ENCODE measurements at regions of chr17 and their contacts with region 1.

Region 1: GRCh38 chr17:27332485-27333409 is 38.8 kb downstream of the WSB1 start:
- DNase-seq: peak; percentile 98
- H3K4me3 ChIP-seq: peak overlapping the region; percentile 68
- H3K27ac ChIP-seq: peak overlapping the region; percentile 97
- H3K4me1 ChIP-seq: peaks cover 24% of the 10 kb centered on the region
- H3K27me3 ChIP-seq: no peaks in the 10 kb centered on the region
- CTCF ChIP-seq: peak; percentile 96

Region 2: DNA sequence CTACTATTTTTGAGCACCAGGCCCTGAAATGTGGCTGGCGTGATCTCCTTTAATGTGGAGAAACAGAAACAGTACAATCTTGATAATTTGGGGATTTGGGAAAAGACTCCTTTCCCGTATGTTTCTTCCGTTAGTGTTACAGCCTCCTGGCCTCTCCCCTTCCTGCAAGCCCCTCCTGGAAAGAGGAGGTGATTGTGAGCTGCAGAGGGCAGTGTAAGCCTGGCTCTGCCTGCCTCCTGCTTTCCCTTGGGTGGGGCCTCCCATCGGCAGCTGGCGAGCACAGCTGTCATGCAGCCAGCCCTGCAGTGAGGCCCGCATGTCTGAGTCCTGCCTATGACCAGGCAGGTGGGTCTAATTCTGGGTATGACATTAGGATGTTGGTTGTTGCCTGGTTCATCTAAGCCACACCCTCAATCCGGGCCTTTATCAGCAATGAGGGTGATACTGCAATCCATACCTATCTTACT is 87.5 kb before region 1 on chr17:
- intact Hi-C with region 1: loop called (anchors 5 kb)
- DNase-seq: peak; percentile 86
- H3K4me3 ChIP-seq: peak overlapping the region; percentile 41
- H3K27ac ChIP-seq: peak overlapping the region; percentile 90
- H3K4me1 ChIP-seq: peaks cover 59% of the 10 kb centered on the region
- H3K27me3 ChIP-seq: no peaks in the 10 kb centered on the region
- CTCF ChIP-seq: peak; percentile 83

Region 3: DNA sequence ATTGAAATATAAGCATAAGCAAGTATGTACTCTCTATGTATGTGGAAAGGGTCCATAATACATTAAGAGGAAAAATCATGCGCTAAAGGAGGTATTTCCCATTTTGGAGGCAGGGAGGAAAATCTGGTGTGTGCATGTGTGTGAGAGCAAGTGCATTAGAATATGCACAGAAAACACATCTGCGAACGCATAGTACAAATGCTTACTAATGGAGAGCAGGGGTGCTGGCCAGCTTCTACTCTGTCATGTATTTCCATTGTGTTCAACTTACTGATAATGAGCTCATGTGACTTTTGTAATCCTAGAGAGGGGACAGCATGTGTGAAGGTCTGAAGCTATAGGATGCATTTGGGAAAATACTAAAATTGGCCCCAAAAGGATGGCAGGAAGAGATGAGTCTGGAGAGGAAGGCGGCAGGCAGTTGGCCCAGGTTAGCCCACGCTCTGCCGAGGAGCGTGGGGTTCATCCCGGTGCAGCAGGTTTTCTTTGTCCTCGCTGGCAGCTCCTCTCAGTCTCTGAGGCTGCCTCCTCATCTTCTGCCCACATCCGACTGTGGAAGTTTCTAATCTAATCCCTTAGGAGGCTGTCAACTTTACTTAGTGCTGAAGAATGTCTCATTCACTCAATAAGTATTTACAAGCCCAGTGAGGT is 105.7 kb after region 1 on chr17:
- intact Hi-C with region 1: no loop called
- DNase-seq: no peak
- H3K4me3 ChIP-seq: no peak overlapping the region
- H3K27ac ChIP-seq: no peak overlapping the region
- H3K4me1 ChIP-seq: no peaks in the 10 kb centered on the region
- H3K27me3 ChIP-seq: no peaks in the 10 kb centered on the region
- CTCF ChIP-seq: no peak

Measured in left ventricle myocardium inferior (tissue), 1 donor.